ENCODE measurements at regions of chr15 and their contacts with region 1.

Region 1: GRCh38 chr15:74036271-74037170 is 42.0 kb downstream of the PML start:
- DNase-seq: peak; percentile 34 to 48 (median 38)
- ATAC-seq: peak; percentile 73
- H3K4me3 ChIP-seq: no peak overlapping the region
- H3K27ac ChIP-seq: no peak overlapping the region
- H3K4me1 ChIP-seq: peaks cover 4 to 15% of the 10 kb centered on the region in 2 experiments; a peak in 3 of 5 replicates
- H3K27me3 ChIP-seq: peaks cover 0 to 16% of the 10 kb centered on the region in 2 experiments; a peak in 3 of 5 replicates
- CTCF ChIP-seq: peak; percentile 48 to 53 (median 50)
- EP300 ChIP-seq: no peak
- POLR2A ChIP-seq: no peak
- RAD21 ChIP-seq: peak; percentile 9 to 42; a peak in 1 of 4 replicates

Region 2: DNA sequence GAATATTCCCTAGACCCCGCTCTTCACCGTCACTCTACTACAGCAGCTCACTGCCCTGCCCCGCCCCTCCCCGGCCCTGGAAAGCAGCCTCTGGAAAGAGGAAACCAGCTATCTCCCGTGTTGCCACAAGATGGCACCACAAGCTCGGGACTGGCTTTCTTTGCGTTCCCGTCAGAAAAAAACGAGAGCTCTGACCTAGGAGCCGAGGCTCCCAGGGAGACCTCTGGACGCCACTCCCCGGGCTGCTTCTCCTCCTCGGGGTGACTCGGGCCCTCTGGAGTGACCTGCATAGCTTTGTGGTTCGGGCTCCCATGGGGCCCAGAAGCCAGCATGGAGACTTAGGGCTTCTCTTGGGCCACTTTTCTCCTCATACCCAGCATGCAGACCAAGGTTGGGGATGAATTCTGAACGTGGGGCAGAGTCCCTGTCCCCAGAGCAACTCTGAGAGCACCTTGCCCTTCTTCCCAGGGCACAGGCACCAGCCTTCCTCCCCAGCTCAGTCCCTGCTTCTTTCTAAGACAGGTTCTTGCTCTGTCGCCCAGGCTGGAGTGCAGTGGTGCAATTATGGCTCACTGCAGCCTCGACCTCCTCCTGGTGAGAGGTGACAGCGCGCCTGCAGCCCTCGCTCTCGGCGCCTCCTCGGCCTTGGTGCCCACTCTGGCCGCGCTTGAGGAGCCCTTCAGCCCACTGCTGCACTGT is 63.4 kb before region 1 on chr15:
- CTCF ChIA-PET with region 1: interaction called, 18 read pairs
- POLR2A ChIA-PET with region 1: no interaction called
- in situ Hi-C with region 1: loop called (anchors 5 kb)
- intact Hi-C with region 1: no loop called
- DNase-seq: peak; percentile 80 to 89 (median 82)
- ATAC-seq: peak; percentile 99
- H3K4me3 ChIP-seq: no peak overlapping the region
- H3K27ac ChIP-seq: no peak overlapping the region
- H3K4me1 ChIP-seq: peaks cover 0 to 12% of the 10 kb centered on the region in 2 experiments; a peak in 2 of 5 replicates
- H3K27me3 ChIP-seq: peaks cover 0 to 23% of the 10 kb centered on the region in 2 experiments; a peak in 3 of 5 replicates
- CTCF ChIP-seq: peak; percentile 89 to 98 (median 94)
- EP300 ChIP-seq: no peak
- POLR2A ChIP-seq: no peak
- RAD21 ChIP-seq: peak; percentile 89 to 93

Region 3: GRCh38 chr15:73979636-73980035 is 56.9 kb before region 1 on chr15:
- CTCF ChIA-PET with region 1: no interaction called
- POLR2A ChIA-PET with region 1: no interaction called
- in situ Hi-C with region 1: loop called (anchors 5 kb)
- intact Hi-C with region 1: no loop called
- DNase-seq: no peak
- ATAC-seq: no peak
- H3K4me3 ChIP-seq: no peak overlapping the region
- H3K27ac ChIP-seq: no peak overlapping the region
- H3K4me1 ChIP-seq: peaks cover 4 to 18% of the 10 kb centered on the region in 2 experiments; a peak in 4 of 5 replicates
- H3K27me3 ChIP-seq: peaks cover 0 to 15% of the 10 kb centered on the region in 2 experiments; a peak in 3 of 5 replicates
- CTCF ChIP-seq: no peak
- EP300 ChIP-seq: no peak
- POLR2A ChIP-seq: no peak
- RAD21 ChIP-seq: no peak

Region 4: DNA sequence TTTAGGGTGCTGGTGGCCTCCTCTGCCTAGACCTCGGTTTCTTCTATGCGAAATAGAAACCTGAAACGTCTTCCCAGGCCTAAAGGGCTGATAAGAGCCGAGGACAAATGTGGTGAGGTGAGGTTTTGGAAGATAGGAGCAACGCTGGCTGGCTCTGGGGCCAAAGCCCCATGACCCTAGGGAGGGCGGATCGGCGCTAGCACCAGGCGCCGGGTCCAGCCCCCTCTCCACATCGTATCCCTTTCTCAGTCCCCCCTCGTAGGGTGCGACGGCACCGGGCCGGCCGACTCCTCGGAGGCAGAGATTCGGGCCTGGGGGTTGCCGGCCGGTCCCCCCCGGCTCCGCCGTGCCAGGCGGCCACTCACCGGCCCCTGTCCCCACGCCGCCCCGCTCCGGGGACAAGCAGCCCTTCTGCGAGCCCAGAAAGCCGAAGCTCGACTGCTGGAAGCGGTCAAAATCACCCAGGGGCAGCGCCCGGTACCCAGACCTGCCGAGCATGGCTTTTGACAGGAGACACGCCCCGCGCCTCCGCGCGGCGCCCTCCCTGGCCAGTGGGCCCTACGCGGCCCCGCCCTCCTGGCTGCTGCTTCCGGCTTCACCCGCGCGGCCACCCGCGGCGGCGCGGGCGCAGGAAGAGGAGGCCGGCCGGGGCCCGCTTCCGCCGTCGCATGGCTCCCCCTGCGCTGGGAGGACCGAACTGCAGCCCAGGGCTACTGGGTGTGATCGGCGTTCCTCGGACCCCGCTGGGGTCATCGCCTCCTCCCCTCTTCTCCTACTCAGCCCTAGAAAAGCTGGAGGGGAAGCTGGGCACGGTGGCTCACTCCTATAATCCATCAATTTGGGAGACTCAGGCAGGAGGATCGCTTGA is 44.6 kb before region 1 on chr15 and contains the start of gene STOML1:
- CTCF ChIA-PET with region 1: no interaction called
- POLR2A ChIA-PET with region 1: no interaction called
- in situ Hi-C with region 1: no loop called
- intact Hi-C with region 1: loop called (anchors 5 kb)
- DNase-seq: peak; percentile 93 to 96 (median 95)
- ATAC-seq: peak; percentile 91
- H3K4me3 ChIP-seq: peak within 1 kb of the TSS; percentile 86
- H3K27ac ChIP-seq: peak within 1 kb of the TSS; percentile 56
- H3K4me1 ChIP-seq: peaks cover 38 to 46% of the 10 kb centered on the region in 2 experiments
- H3K27me3 ChIP-seq: no peaks in the 10 kb centered on the region; a peak in 1 of 5 replicates
- CTCF ChIP-seq: peak; percentile 85 to 92 (median 87)
- EP300 ChIP-seq: peak; percentile 66; the same call in 1 of the 2 replicates
- POLR2A ChIP-seq: peak; percentile 70
- RAD21 ChIP-seq: no peak
- polyA plus RNA-seq, gene STOML1: 0.25 to 0.53 TPM

Region 5: GRCh38 chr15:74322181-74323076 is 285.9 kb after region 1 on chr15:
- CTCF ChIA-PET with region 1: no interaction called
- POLR2A ChIA-PET with region 1: no interaction called
- in situ Hi-C with region 1: no loop called
- intact Hi-C with region 1: no loop called
- DNase-seq: peak; percentile 74 to 81 (median 78)
- ATAC-seq: peak; percentile 93
- H3K4me3 ChIP-seq: no peak overlapping the region
- H3K27ac ChIP-seq: no peak overlapping the region
- H3K4me1 ChIP-seq: no peaks in the 10 kb centered on the region
- H3K27me3 ChIP-seq: peaks cover 0 to 11% of the 10 kb centered on the region in 2 experiments; a peak in 2 of 5 replicates
- CTCF ChIP-seq: peak; percentile 93 to 95 (median 94)
- EP300 ChIP-seq: no peak
- POLR2A ChIP-seq: no peak
- RAD21 ChIP-seq: peak; percentile 87 to 97